ENCODE measurements at regions of chr2 and their contacts with region 1.

Region 1: GRCh38 chr2:11411768-11412448 is 54.1 kb downstream of the E2F6 start:
- DNase-seq: peak; percentile 30 to 37
- H3K4me3 ChIP-seq: no peak overlapping the region
- H3K27ac ChIP-seq: no peak overlapping the region
- H3K4me1 ChIP-seq: no peaks in the 10 kb centered on the region
- H3K27me3 ChIP-seq: no peaks in the 10 kb centered on the region
- CTCF ChIP-seq: peak; percentile 46 to 81 (median 68)
- POLR2A ChIP-seq: no peak

Region 2: DNA sequence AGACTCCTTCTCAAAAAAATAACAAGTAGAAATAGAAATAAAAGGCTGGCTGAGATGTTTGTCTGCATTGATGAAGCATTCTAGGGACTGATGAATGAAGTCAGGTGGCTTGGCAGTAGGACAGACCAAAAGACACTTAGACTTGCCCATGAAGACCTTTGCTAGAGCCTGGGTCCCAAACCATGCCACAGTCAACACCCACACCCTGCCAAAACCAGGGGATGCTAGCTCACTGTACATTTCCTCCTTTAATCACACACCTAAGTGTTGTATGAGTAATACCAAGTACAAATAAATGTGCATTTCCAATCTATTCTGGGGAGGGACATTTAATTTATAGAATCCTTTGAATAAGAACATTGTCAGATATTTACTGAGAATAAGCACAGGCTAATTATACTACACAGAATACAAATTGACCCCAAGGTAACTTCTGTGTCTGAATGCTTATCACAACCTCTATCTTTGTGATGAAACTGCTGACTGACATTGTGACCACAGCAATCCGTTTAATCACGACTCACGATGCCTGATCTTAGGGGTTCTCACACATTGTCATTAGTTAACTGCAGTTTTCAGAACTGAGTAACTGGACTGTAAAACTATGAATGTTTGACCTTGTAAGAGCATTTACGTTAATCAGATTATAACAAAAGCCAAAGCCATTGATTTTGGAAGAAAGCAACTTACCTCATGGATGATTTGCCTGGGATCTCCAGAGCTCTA is 711.7 kb before region 1 on chr2:
- intact Hi-C with region 1: no loop called
- DNase-seq: no peak
- H3K4me3 ChIP-seq: no peak overlapping the region
- H3K27ac ChIP-seq: no peak overlapping the region
- H3K4me1 ChIP-seq: no peaks in the 10 kb centered on the region
- H3K27me3 ChIP-seq: no peaks in the 10 kb centered on the region
- CTCF ChIP-seq: no peak
- POLR2A ChIP-seq: no peak

Region 3: GRCh38 chr2:11129598-11130449 is 282.1 kb before region 1 on chr2:
- intact Hi-C with region 1: loop called (anchors 5 kb)
- DNase-seq: peak; percentile 78 to 80
- H3K4me3 ChIP-seq: peak overlapping the region in 1 of 3 donors; percentile 23
- H3K27ac ChIP-seq: peak overlapping the region in 2 of 3 donors; percentile 2 to 30
- H3K4me1 ChIP-seq: peaks cover 13 to 27% of the 10 kb centered on the region in 2 donors
- H3K27me3 ChIP-seq: no peaks in the 10 kb centered on the region
- CTCF ChIP-seq: peak in 3 of 6 experiments; percentile 29 to 55 (median 45)
- POLR2A ChIP-seq: peak in 1 of 2 donors; percentile 18

Region 4: GRCh38 chr2:11234309-11234708 is 177.6 kb before region 1 on chr2:
- intact Hi-C with region 1: loop called (anchors 5 kb)
- DNase-seq: no peak
- H3K4me3 ChIP-seq: no peak overlapping the region
- H3K27ac ChIP-seq: no peak overlapping the region
- H3K4me1 ChIP-seq: no peaks in the 10 kb centered on the region
- H3K27me3 ChIP-seq: no peaks in the 10 kb centered on the region
- CTCF ChIP-seq: peak in 3 of 6 experiments; percentile 50 to 72 (median 61)
- POLR2A ChIP-seq: no peak